GM12878 (cell line): ENCODE measurements at regions of chr11 and their contacts with region 1.

Region 1: DNA sequence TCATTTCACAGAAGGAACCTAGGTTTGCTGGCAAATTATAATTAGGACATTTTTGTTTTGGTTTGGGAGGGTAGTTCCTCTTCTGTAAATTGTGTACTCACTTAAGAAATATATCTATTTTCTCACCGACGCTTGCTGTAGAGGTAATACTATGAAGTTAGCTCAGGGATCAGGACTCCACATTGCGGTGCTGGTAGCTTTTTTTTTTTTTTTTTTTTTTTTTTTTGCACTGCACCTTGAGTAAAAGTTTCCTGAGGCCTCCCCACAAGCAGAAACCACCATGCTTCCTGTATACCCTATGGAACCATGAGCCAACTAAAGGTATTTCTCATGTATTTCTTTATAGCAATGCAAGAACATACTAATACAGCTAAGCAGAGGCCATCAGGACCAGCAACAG is 14.7 kb downstream of the UBTFL1 start:
- DNase-seq: no peak
- ATAC-seq: no peak
- H3K4me3 ChIP-seq: no peak overlapping the region
- H3K27ac ChIP-seq: no peak overlapping the region
- H3K4me1 ChIP-seq: no peaks in the 10 kb centered on the region
- H3K27me3 ChIP-seq: no peaks in the 10 kb centered on the region
- CTCF ChIP-seq: no peak
- EP300 ChIP-seq: no peak
- POLR2A ChIP-seq: no peak
- RAD21 ChIP-seq: no peak

Region 2: DNA sequence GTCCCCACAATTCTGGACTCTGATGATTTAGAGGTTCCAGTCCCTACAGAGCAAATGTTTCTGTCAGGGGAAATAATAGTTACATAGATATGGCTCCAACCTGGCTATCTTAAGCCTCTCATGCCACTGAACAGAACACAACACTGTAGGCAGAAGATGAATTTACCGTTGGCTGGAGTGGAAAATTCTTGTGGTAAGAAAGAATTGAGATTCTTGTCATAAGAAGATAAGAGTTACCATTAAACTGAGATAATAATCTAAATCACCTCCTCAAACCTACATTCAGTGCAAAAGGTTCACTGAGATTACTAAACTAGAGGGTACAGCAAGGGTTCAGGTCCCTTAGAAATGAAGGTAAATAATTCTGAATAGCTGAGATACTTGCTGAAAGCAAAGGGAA is 23.9 kb after region 1 on chr11:
- CTCF ChIA-PET with region 1: no interaction called
- POLR2A ChIA-PET with region 1: no interaction called
- RAD21 ChIA-PET with region 1: no interaction called
- SMC1A ChIA-PET with region 1: no interaction called
- in situ Hi-C with region 1: no loop called
- intact Hi-C with region 1: no loop called
- DNase-seq: no peak
- ATAC-seq: no peak
- H3K4me3 ChIP-seq: no peak overlapping the region
- H3K27ac ChIP-seq: no peak overlapping the region
- H3K4me1 ChIP-seq: no peaks in the 10 kb centered on the region
- H3K27me3 ChIP-seq: no peaks in the 10 kb centered on the region
- CTCF ChIP-seq: no peak
- EP300 ChIP-seq: no peak
- POLR2A ChIP-seq: no peak
- RAD21 ChIP-seq: no peak

Region 3: DNA sequence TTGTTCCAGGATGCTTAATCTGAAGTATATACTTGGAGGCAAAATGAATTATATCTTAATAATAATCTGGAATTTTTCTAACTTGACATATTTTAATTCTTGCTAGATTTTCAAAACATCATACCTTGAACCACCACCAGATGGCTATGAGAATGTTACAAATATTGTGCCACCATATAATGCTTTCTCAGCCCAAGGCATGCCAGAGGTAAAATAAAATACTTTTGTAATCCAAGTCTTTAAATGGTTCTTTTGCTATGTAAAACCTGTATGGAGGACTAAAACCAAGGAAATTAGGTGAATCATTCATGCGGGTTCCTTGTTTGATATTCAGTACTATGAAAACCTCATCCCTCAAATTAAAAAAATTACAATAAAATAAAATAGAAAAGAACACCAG is 48.5 kb after region 1 on chr11:
- CTCF ChIA-PET with region 1: no interaction called
- POLR2A ChIA-PET with region 1: no interaction called
- RAD21 ChIA-PET with region 1: no interaction called
- SMC1A ChIA-PET with region 1: no interaction called
- in situ Hi-C with region 1: no loop called
- intact Hi-C with region 1: loop called (anchors 5 kb)
- DNase-seq: no peak
- ATAC-seq: no peak
- H3K4me3 ChIP-seq: no peak overlapping the region
- H3K27ac ChIP-seq: no peak overlapping the region
- H3K4me1 ChIP-seq: no peaks in the 10 kb centered on the region
- H3K27me3 ChIP-seq: no peaks in the 10 kb centered on the region
- CTCF ChIP-seq: no peak
- EP300 ChIP-seq: no peak
- POLR2A ChIP-seq: no peak
- RAD21 ChIP-seq: no peak